ENCODE measurements at regions of chr5 and their contacts with region 1.

Region 1: DNA sequence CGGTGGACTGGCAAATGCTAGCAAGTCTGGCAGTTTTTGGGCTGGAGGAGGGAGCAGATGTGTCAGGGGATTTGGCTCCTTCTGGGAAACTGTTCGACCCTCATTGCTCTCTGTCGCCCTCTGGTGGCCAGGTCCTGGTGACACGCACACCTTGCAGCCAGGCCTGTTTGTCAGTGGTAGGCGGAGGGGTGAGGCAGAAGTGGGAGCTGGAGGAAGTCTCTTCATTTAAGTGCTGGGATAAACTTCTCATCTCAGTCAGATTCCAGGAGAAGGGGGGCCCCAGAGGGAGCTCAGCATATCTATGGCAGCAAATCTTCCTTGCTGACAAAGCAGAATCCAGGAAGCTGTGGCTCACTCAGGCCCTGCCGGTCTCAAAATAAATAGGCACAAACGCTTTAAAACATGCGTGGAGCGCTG is 326.5 kb downstream of the ZSWIM6 start:
- DNase-seq: peak; percentile 79 to 93 (median 85)
- ATAC-seq: peak; percentile 80 to 92 (median 92)
- H3K4me3 ChIP-seq: peak overlapping the region in 8 of 12 donors; percentile 5 to 42 (median 27)
- H3K27ac ChIP-seq: peak overlapping the region in 4 of 12 donors; percentile 42 to 64 (median 62)
- H3K4me1 ChIP-seq: peaks cover 0 to 12% (median 1%) of the 10 kb centered on the region in 12 donors
- H3K27me3 ChIP-seq: no peaks in the 10 kb centered on the region
- CTCF ChIP-seq: peak; percentile 86 to 97 (median 92)
- POLR2A ChIP-seq: no peak

Region 2: GRCh38 chr5:60960591-60960990 is 698.0 kb before region 1 on chr5:
- intact Hi-C with region 1: loop called in 6 of 10 experiments (anchors 2 to 10 kb)
- DNase-seq: no peak
- ATAC-seq: no peak
- H3K4me3 ChIP-seq: no peak overlapping the region
- H3K27ac ChIP-seq: no peak overlapping the region
- H3K4me1 ChIP-seq: peaks cover 0 to 14% (median 0%) of the 10 kb centered on the region in 12 donors
- H3K27me3 ChIP-seq: no peaks in the 10 kb centered on the region
- CTCF ChIP-seq: peak in 10 of 12 donors; percentile 19 to 55 (median 38)
- POLR2A ChIP-seq: no peak

Region 3: GRCh38 chr5:61055434-61056006 is 603.1 kb before region 1 on chr5:
- intact Hi-C with region 1: loop called in 7 of 10 experiments (anchors 5 to 10 kb)
- DNase-seq: no peak
- ATAC-seq: no peak
- H3K4me3 ChIP-seq: no peak overlapping the region
- H3K27ac ChIP-seq: no peak overlapping the region
- H3K4me1 ChIP-seq: peaks cover 0 to 3% (median 0%) of the 10 kb centered on the region in 12 donors
- H3K27me3 ChIP-seq: no peaks in the 10 kb centered on the region
- CTCF ChIP-seq: peak; percentile 36 to 69 (median 58)
- POLR2A ChIP-seq: no peak

Region 4: DNA sequence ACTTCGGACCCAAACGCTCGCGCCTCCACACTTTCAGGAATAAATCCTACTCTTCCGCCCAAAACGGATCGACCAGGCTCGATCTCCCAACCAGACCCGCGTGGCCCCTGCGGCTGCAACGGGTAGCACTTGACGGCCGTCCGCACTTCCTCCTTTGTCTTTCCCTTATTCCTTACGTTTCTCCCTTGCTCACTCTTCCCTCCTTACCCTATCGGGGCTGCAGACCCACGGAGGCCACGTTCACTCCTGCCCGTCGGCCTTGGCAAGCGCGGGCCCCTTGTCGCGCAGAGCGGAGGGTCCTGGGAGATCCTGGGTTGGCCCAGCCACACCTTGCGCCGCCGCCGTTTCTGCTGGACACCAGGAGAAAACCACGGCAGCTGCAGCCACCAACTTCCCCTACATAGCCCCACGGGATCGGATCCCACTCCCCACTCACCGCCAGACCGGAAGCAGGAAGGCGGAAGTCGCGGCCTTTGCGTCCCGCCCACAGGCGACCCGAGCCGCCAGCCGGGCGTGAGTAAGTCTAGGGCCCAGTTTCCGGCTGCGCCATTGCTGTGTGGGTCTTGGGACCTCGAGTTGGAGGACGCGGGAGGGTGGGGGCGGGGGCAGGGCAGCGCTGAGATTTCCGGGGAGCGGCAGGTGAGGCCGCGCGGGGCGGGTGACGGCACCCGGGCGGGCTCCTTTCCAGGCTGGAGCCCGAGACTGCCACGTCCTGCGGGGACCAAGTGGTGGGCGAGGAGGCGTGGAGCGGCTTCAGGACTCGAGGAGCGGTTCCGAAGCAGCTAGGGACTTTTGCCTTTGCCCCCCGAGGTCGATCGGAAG is 496.4 kb before region 1 on chr5 and contains the start of gene SMIM15:
- intact Hi-C with region 1: loop called in 8 of 10 experiments (anchors 2 to 10 kb)
- DNase-seq: peak; percentile 88 to 95 (median 93)
- ATAC-seq: peak; percentile 96 to 99 (median 99)
- H3K4me3 ChIP-seq: peak within 1 kb of the TSS; percentile 79 to 96 (median 86)
- H3K27ac ChIP-seq: peak within 1 kb of the TSS; percentile 89 to 97 (median 94)
- H3K4me1 ChIP-seq: peaks cover 0 to 50% (median 9%) of the 10 kb centered on the region in 12 donors
- H3K27me3 ChIP-seq: no peaks in the 10 kb centered on the region
- CTCF ChIP-seq: no peak
- POLR2A ChIP-seq: peak in 1 of 2 donors; percentile 59
- total RNA-seq, gene SMIM15: 8.0 to 39.3 (median 22.2) TPM

Region 5: DNA sequence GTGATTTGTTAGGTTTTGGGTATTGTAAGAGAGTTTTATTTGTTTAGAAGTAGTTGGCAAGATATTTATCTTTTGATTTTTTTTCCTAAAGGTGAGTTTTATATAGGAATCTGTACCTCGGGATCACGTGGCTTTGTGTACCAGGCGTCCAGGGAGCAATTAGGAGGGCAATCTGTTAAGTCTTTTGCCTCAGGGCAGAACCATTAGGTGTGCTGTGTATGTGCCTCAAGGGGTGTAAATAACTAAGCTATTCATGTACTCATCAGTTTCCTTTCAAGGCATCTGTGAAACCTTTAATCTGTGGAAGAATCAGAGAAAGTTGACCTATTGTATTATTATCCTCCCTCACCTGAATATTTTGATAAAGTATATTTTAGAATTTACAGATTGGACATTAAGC is 287.1 kb before region 1 on chr5:
- intact Hi-C with region 1: no loop called
- DNase-seq: no peak
- ATAC-seq: no peak
- H3K4me3 ChIP-seq: no peak overlapping the region
- H3K27ac ChIP-seq: no peak overlapping the region
- H3K4me1 ChIP-seq: no peaks in the 10 kb centered on the region
- H3K27me3 ChIP-seq: no peaks in the 10 kb centered on the region
- CTCF ChIP-seq: no peak
- POLR2A ChIP-seq: no peak

Region 6: DNA sequence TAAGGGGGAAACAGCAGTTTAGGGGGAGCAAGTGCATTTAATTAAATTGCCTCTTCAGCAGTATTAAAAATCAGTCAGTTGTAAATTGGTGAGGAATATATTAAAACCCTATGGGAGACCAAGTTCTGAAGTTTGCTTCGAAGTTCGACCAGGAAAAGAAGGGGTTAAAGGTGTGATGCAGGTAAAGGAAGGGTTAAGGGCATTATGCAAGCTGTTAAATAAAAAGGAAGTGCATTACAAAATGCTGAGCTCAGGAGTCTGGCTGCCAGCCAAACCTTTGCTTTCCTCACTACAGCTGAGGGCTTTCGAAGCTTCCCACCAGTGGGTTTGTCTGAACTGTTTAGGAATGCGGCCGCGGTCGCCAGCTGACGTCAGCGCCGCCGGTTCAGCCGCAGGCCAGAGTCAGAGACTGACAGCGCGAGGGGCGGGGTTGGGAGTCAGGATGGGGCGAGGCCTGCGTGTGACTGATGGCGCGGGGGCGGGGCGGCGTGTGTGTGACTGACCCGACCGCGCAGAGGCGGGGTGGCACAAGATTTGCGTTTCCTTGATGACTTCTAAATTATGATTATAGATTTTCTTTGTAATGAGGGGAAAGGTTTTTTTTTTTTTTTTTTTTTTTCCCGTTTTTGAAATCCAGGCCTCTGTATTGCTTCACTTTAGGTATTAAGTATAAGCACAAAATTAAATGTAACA is 250.0 kb before region 1 on chr5:
- intact Hi-C with region 1: loop called in 3 of 10 experiments (anchors 10 kb)
- DNase-seq: peak; percentile 99 to 100 (median 100)
- ATAC-seq: peak; percentile 100
- H3K4me3 ChIP-seq: peak overlapping the region in 9 of 12 donors; percentile 6 to 50 (median 33)
- H3K27ac ChIP-seq: peak overlapping the region in 9 of 12 donors; percentile 4 to 74 (median 36)
- H3K4me1 ChIP-seq: peaks cover 3 to 38% (median 19%) of the 10 kb centered on the region in 12 donors
- H3K27me3 ChIP-seq: no peaks in the 10 kb centered on the region
- CTCF ChIP-seq: peak in 1 of 12 donors; percentile 9
- POLR2A ChIP-seq: peak in 1 of 2 donors; percentile 14

Region 7: GRCh38 chr5:61416010-61416409 is 242.6 kb before region 1 on chr5:
- intact Hi-C with region 1: loop called in 2 of 10 experiments (anchors 5 to 10 kb)
- DNase-seq: no peak
- ATAC-seq: no peak
- H3K4me3 ChIP-seq: no peak overlapping the region
- H3K27ac ChIP-seq: no peak overlapping the region
- H3K4me1 ChIP-seq: peaks cover 0 to 23% (median 2%) of the 10 kb centered on the region in 12 donors
- H3K27me3 ChIP-seq: no peaks in the 10 kb centered on the region
- CTCF ChIP-seq: no peak
- POLR2A ChIP-seq: no peak

Region 8: GRCh38 chr5:61625681-61626621 is 32.6 kb before region 1 on chr5:
- intact Hi-C with region 1: loop called in 2 of 10 experiments (anchors 2 to 5 kb)
- DNase-seq: peak; percentile 79 to 91 (median 87)
- ATAC-seq: peak; percentile 94 to 98 (median 98)
- H3K4me3 ChIP-seq: peak overlapping the region; percentile 35 to 74 (median 64)
- H3K27ac ChIP-seq: peak overlapping the region; percentile 61 to 96 (median 90)
- H3K4me1 ChIP-seq: peaks cover 0 to 30% (median 15%) of the 10 kb centered on the region in 12 donors
- H3K27me3 ChIP-seq: no peaks in the 10 kb centered on the region
- CTCF ChIP-seq: peak in 2 of 12 donors; percentile 13 to 15
- POLR2A ChIP-seq: peak in 1 of 2 donors; percentile 43

Measured in heart left ventricle (tissue), 16 donors.